Mammary epithelial cell (primary cell): ENCODE measurements at regions of chr9 and their contacts with region 1.

Region 1: GRCh38 chr9:96279960-96280359 is 22.0 kb downstream of the HSD17B3 start:
- DNase-seq: peak; percentile 27
- H3K4me3 ChIP-seq: no peak overlapping the region
- H3K27ac ChIP-seq: no peak overlapping the region
- H3K4me1 ChIP-seq: no peaks in the 10 kb centered on the region
- H3K27me3 ChIP-seq: peaks cover 9% of the 10 kb centered on the region
- CTCF ChIP-seq: no peak

Region 2: DNA sequence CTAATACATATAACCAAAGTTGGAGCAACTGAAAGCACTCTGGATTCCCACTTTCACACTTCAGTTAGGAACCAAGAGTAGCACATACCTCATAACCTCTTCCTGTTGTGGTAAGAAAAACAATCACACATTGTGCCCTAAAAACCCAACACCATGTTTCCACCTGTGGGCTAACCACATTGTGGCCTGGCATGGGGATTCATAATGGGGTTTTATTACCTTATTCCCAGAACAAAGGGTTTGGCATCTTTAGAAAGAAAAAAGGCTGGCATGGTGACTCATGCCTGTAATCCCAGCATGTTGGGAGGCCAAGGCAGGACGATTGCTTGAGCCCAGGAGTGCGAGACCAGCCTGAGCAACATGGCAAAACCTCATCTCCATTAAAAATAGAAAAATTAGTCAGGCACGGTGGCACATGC is 38.6 kb before region 1 on chr9:
- CTCF ChIA-PET with region 1: no interaction called
- dilution Hi-C with region 1: no loop called
- in situ Hi-C with region 1: no loop called
- intact Hi-C with region 1: loop called (anchors 5 kb)
- DNase-seq: peak; percentile 97
- H3K4me3 ChIP-seq: no peak overlapping the region
- H3K27ac ChIP-seq: no peak overlapping the region
- H3K4me1 ChIP-seq: peaks cover 7% of the 10 kb centered on the region
- H3K27me3 ChIP-seq: peaks cover 59% of the 10 kb centered on the region
- CTCF ChIP-seq: no peak